ENCODE measurements at regions of chr19 and their contacts with region 1.

Region 1: DNA sequence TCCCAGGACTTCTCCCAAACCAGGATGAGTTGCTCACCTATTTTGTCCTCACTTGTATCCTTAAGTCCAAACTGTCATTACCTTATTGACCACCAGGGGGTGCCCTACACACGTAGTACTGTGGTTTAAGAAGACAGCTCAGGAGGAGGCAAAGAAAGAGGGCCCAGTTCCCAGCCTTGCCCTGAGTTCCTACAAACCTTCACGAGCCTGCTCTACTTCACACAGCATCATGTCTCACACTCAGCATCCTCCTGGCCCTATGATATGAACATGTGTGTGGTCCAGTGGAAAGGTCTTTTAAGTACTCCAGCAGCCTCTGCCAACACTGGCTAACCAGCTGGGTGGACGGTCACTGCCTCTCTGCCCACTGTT is 8.1 kb upstream of the ZNF784 start:
- DNase-seq: peak; percentile 75
- ATAC-seq: peak; percentile 75
- H3K4me3 ChIP-seq: no peak overlapping the region
- H3K27ac ChIP-seq: no peak overlapping the region
- H3K4me1 ChIP-seq: peaks cover 19% of the 10 kb centered on the region
- H3K27me3 ChIP-seq: no peaks in the 10 kb centered on the region
- CTCF ChIP-seq: peak; percentile 75 to 85 (median 76)
- EP300 ChIP-seq: no peak
- POLR2A ChIP-seq: no peak
- RAD21 ChIP-seq: peak; percentile 91

Region 2: DNA sequence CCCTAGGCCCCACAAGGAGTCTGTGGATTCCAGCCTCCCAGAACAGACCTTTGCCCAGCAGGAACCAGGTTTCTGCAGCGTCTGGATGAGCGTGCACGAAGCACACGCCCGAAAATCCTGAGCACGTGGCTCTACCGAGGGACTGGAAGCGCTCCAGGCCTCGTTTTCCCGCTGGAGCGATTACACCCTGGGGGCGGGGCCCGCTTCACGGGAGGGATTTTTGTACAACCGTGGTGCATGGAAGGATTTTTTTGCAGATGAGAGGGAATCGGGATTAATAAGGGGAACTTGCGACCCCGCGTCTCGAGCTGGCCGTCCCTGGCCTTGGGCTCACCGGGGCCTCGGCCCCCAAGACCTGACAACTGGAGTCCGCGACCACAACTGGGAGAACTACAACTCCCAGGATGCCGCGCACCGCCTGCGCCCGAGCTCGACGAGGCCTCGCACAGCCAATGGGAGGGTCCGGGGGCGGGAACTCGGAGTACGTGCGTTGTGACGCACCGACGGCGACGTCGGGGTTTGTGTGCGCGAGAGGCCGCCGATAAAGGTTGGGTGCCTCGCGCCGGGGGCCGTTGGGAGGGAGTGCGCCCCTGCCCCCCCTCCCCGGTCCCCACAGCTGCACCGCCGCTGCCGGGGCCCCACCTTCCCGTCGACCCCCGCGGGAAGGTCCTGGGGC is 156.2 kb before region 1 on chr19 and contains the start of gene ZNF628:
- CTCF ChIA-PET with region 1: interaction called, 15 read pairs
- POLR2A ChIA-PET with region 1: no interaction called
- RAD21 ChIA-PET with region 1: interaction called, 6 read pairs
- SMC1A ChIA-PET with region 1: interaction called, 4 read pairs
- in situ Hi-C with region 1: no loop called
- intact Hi-C with region 1: no loop called
- DNase-seq: peak; percentile 83
- ATAC-seq: peak; percentile 97
- H3K4me3 ChIP-seq: peak within 1 kb of the TSS; percentile 86
- H3K27ac ChIP-seq: peak within 1 kb of the TSS; percentile 74
- H3K4me1 ChIP-seq: peaks cover 22% of the 10 kb centered on the region
- H3K27me3 ChIP-seq: no peaks in the 10 kb centered on the region
- CTCF ChIP-seq: no peak
- EP300 ChIP-seq: no peak
- POLR2A ChIP-seq: peak; percentile 75
- RAD21 ChIP-seq: no peak
- polyA plus RNA-seq, gene ZNF628: 0.04 TPM in 1 of 2 experiments, not detected in the other

Region 3: GRCh38 chr19:55563261-55563690 is 69.2 kb before region 1 on chr19:
- CTCF ChIA-PET with region 1: no interaction called
- POLR2A ChIA-PET with region 1: no interaction called
- RAD21 ChIA-PET with region 1: no interaction called
- SMC1A ChIA-PET with region 1: no interaction called
- in situ Hi-C with region 1: no loop called
- intact Hi-C with region 1: no loop called
- DNase-seq: no peak
- ATAC-seq: no peak
- H3K4me3 ChIP-seq: no peak overlapping the region
- H3K27ac ChIP-seq: no peak overlapping the region
- H3K4me1 ChIP-seq: no peaks in the 10 kb centered on the region
- H3K27me3 ChIP-seq: no peaks in the 10 kb centered on the region
- CTCF ChIP-seq: no peak
- EP300 ChIP-seq: no peak
- POLR2A ChIP-seq: no peak
- RAD21 ChIP-seq: no peak

Region 4: DNA sequence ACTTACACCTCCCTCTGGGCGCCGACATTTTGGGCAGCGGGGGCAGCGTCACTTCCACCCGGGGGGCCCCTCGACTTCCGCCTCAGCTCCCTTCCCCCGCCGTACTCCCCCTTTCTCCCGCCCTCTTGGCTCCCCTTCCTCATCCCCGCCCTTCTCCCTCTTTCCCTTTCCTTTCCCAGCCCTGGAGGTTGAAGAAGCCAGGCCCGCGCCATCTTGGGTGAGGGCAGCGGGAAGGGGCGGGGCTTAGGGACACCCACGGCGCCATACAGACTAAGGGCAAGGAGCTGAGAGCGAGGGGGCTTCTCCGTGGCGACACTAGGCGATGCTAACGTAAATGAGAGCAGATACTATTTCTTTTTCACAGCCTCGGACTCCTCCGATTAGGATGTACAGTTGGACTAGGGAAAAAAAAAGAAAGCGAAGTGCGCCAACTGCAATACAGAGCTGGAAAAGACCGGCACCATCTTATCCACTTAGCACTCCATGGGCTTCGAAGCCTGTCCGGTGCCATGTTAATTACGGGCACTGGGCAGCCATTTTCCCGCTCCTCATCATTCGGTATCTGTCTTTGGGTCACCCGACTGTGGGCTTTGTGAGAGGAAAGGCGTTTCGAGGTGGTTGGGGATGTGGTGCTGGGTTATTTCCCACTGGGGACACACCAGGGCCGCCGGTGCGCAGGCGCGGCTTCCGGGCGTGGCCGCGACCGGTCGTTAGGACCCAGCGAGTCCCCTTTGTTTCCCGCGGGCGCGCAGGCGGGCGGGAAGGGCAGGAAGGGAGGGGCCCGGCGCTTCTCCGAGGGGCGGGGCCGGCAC is 32.8 kb before region 1 on chr19 and contains the start of gene FIZ1:
- CTCF ChIA-PET with region 1: interaction called, 76 read pairs
- POLR2A ChIA-PET with region 1: interaction called, 4 read pairs
- RAD21 ChIA-PET with region 1: interaction called, 4 read pairs
- SMC1A ChIA-PET with region 1: interaction called, 16 read pairs
- in situ Hi-C with region 1: no loop called
- intact Hi-C with region 1: no loop called
- DNase-seq: peak; percentile 95
- ATAC-seq: peak; percentile 89
- H3K4me3 ChIP-seq: peak within 1 kb of the TSS; percentile 88
- H3K27ac ChIP-seq: peak within 1 kb of the TSS; percentile 99
- H3K4me1 ChIP-seq: peaks cover 8% of the 10 kb centered on the region; the same call in 1 of the 2 replicates
- H3K27me3 ChIP-seq: no peaks in the 10 kb centered on the region
- CTCF ChIP-seq: no peak
- EP300 ChIP-seq: 0 out of 4 replicates have a peak, but pooled peaks of 1 of the 2 experiments have one; percentile 24
- POLR2A ChIP-seq: peak; percentile 74
- RAD21 ChIP-seq: no peak
- polyA plus RNA-seq, gene FIZ1: 0.60 to 1.5 TPM

Region 5: GRCh38 chr19:55653758-55654539 is 21.5 kb after region 1 on chr19:
- CTCF ChIA-PET with region 1: interaction called, 85 read pairs
- POLR2A ChIA-PET with region 1: interaction called, 28 read pairs
- RAD21 ChIA-PET with region 1: interaction called, 36 read pairs
- SMC1A ChIA-PET with region 1: interaction called, 28 read pairs
- in situ Hi-C with region 1: no loop called
- intact Hi-C with region 1: no loop called
- DNase-seq: peak; percentile 95
- ATAC-seq: peak; percentile 83
- H3K4me3 ChIP-seq: peak overlapping the region; percentile 75
- H3K27ac ChIP-seq: peak overlapping the region; percentile 100
- H3K4me1 ChIP-seq: peaks cover 19% of the 10 kb centered on the region
- H3K27me3 ChIP-seq: no peaks in the 10 kb centered on the region
- CTCF ChIP-seq: peak; percentile 100; a peak in 5 of 6 replicates
- EP300 ChIP-seq: no peak
- POLR2A ChIP-seq: peak; percentile 80
- RAD21 ChIP-seq: peak; percentile 57; the same call in 1 of the 2 replicates

Region 6: GRCh38 chr19:55738302-55738701 is 105.9 kb after region 1 on chr19 and contains the start of gene NLRP9:
- CTCF ChIA-PET with region 1: no interaction called
- POLR2A ChIA-PET with region 1: no interaction called
- RAD21 ChIA-PET with region 1: no interaction called
- SMC1A ChIA-PET with region 1: no interaction called
- in situ Hi-C with region 1: no loop called
- intact Hi-C with region 1: no loop called
- DNase-seq: no peak
- ATAC-seq: no peak
- H3K4me3 ChIP-seq: no peak within 1 kb of the TSS
- H3K27ac ChIP-seq: no peak within 1 kb of the TSS
- H3K4me1 ChIP-seq: no peaks in the 10 kb centered on the region
- H3K27me3 ChIP-seq: no peaks in the 10 kb centered on the region
- CTCF ChIP-seq: no peak
- EP300 ChIP-seq: no peak
- POLR2A ChIP-seq: no peak
- RAD21 ChIP-seq: no peak
- polyA plus RNA-seq, gene NLRP9: not detected

Region 7: GRCh38 chr19:56066152-56067023 is 433.9 kb after region 1 on chr19:
- CTCF ChIA-PET with region 1: interaction called, 12 read pairs
- POLR2A ChIA-PET with region 1: no interaction called
- RAD21 ChIA-PET with region 1: interaction called, 12 read pairs
- SMC1A ChIA-PET with region 1: interaction called, 7 read pairs
- in situ Hi-C with region 1: no loop called
- intact Hi-C with region 1: loop called (anchors 10 kb)
- DNase-seq: no peak
- ATAC-seq: peak; percentile 87
- H3K4me3 ChIP-seq: peak overlapping the region; percentile 24; the same call in 1 of the 2 replicates
- H3K27ac ChIP-seq: no peak overlapping the region
- H3K4me1 ChIP-seq: no peaks in the 10 kb centered on the region
- H3K27me3 ChIP-seq: no peaks in the 10 kb centered on the region
- CTCF ChIP-seq: peak; percentile 85 to 94 (median 88)
- EP300 ChIP-seq: no peak
- POLR2A ChIP-seq: no peak
- RAD21 ChIP-seq: peak; percentile 71

Region 8: GRCh38 chr19:56333505-56333904 is 701.1 kb after region 1 on chr19:
- CTCF ChIA-PET with region 1: interaction called, 12 read pairs
- POLR2A ChIA-PET with region 1: no interaction called
- RAD21 ChIA-PET with region 1: interaction called, 19 read pairs
- SMC1A ChIA-PET with region 1: interaction called, 8 read pairs
- in situ Hi-C with region 1: no loop called
- intact Hi-C with region 1: loop called (anchors 5 kb)
- DNase-seq: no peak
- ATAC-seq: peak; percentile 86
- H3K4me3 ChIP-seq: no peak overlapping the region
- H3K27ac ChIP-seq: no peak overlapping the region
- H3K4me1 ChIP-seq: no peaks in the 10 kb centered on the region
- H3K27me3 ChIP-seq: no peaks in the 10 kb centered on the region
- CTCF ChIP-seq: peak; percentile 65 to 81 (median 69); a peak in 5 of 6 replicates
- EP300 ChIP-seq: no peak
- POLR2A ChIP-seq: no peak
- RAD21 ChIP-seq: peak; percentile 94

Measured in GM12878 (cell line).